ENCODE measurements at regions of chr12 and their contacts with region 1.

Region 1: DNA sequence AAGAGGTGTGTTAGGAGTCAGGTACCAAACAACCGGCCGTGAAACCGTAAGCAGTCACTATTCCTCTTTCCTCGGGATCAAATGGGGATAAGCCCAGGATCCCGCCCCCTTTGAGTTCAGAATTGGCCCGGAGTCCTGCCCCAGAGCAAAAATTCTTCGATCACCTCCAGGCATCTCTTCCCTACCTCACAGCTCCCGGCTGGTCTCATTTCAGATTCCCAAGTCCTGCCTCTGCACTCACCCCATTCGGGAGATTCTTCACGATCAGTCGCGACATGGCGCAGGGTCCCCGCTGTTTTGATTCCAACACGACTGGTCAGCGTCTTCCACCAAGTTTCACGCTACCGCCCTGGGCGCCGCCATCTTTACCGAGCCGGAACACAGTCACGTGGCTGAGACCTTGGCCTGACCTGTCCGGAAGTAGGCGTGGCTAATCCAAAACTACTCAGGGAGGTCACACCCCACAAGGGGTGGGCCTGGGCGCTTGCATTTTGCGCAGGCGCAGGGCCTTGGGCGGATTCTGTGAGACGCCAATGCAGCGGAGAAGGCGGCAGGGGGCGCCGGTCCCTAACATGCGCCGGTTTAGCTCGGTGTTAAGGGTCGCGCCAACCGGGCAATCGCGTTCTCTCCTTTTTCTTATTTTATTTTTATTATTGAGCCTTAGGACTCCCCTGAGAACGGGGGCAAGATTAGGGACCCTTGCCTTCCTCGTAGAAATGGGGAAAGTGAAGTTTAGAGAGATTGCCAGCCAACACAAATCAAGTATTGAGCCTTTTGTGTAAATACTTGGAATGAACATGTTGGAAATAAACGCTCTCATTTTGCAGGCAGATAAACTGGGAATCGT is at the start of gene RBM19:
- DNase-seq: peak; percentile 98
- H3K4me3 Mint-ChIP-seq: peak within 1 kb of the TSS; percentile 100
- H3K27ac Mint-ChIP-seq: peak within 1 kb of the TSS; percentile 91
- H3K4me1 Mint-ChIP-seq: peaks cover 52% of the 10 kb centered on the region
- H3K27me3 Mint-ChIP-seq: no peaks in the 10 kb centered on the region
- total RNA-seq, gene RBM19: 89.0 to 96.2 TPM

Region 2: DNA sequence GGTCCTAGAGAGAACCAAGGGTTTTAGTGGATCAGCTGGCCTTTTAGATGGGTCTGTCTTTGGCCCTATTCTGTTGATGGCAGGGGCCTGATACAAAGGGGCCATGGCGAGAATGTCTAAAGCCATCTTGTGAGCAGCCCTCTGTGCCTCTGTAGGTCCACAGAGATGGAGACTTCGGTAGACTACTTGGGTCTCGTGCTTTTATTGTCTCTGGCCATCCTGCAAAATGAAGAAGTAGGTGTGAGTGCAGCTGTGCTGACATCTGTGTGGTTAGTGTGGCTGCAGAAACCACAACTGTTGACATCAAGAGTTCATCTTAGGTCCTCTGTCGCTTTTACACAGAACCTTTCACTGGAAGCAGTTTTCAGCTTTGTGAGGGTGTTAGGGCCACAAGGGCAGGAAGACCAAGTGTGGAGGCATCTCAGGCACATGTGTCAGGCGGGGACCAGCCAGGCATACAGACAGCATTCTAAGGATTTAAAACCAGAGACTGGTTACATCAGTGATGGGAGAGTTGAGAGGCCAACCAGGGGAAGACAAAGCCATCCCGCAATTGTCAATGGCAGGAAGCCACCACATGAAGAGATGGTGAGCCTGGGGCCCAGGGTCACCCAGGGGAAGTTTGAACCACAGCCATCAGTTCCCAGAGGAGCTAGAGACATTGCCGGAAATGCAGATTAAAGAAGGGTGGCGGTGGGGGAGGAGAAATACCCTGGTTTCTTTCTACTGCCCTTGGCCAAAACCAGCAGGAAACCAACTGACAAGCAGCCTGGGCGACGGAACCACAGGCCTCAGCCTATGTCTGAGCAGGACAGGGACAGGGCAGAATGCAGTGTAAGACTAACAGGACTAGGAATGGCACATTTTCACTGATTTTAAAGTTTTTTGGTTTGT is 757.9 kb before region 1 on chr12:
- CTCF ChIA-PET with region 1: no interaction called
- intact Hi-C with region 1: loop called (anchors 1 kb)
- DNase-seq: peak; percentile 89
- H3K4me3 Mint-ChIP-seq: peak overlapping the region; percentile 34
- H3K27ac Mint-ChIP-seq: peak overlapping the region; percentile 95
- H3K4me1 Mint-ChIP-seq: peaks cover 41% of the 10 kb centered on the region
- H3K27me3 Mint-ChIP-seq: no peaks in the 10 kb centered on the region

Region 3: DNA sequence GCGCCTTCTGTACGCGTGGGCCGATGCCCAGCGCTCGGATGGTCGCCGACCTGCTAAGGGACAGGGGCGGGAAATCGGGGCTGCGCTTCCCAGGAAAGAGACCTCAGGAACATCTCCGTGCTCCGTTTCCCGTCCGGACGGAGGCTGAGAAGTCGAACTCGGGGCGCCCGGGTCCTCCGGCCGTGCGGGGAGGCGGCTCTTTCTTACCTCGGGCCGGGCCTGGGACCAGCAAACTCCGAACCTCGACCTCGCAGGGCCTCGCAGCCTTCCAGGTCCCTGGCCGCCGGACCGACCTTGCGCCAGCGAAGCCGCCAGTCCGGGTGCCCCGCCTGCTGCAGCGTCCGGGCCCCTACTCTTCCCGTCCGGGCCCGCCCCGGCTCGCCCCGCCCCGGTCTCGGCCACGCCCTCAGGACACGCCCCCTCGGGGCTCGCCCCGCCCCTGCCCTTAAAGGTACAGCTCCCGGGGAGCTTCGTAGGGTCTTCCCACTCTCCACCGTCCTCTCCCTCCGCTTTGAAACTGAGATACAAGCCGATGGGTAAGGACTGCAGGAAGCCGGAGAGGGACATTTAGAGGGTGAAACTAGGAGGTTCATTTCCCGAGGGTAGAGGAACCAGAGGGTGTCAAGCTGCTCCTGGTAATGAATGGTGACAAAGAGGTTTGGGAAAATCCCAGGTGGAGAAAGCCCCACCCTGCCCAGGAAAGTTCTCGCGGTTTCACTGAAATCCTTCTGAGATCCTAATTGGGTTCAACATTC is 631.2 kb before region 1 on chr12 and contains the start of gene SLC8B1:
- CTCF ChIA-PET with region 1: no interaction called
- intact Hi-C with region 1: loop called (anchors 5 kb)
- DNase-seq: peak; percentile 87
- H3K4me3 Mint-ChIP-seq: peak within 1 kb of the TSS; percentile 96
- H3K27ac Mint-ChIP-seq: peak within 1 kb of the TSS; percentile 84
- H3K4me1 Mint-ChIP-seq: peaks cover 34% of the 10 kb centered on the region
- H3K27me3 Mint-ChIP-seq: no peaks in the 10 kb centered on the region
- total RNA-seq, gene SLC8B1: 20.2 to 20.4 TPM

Region 4: DNA sequence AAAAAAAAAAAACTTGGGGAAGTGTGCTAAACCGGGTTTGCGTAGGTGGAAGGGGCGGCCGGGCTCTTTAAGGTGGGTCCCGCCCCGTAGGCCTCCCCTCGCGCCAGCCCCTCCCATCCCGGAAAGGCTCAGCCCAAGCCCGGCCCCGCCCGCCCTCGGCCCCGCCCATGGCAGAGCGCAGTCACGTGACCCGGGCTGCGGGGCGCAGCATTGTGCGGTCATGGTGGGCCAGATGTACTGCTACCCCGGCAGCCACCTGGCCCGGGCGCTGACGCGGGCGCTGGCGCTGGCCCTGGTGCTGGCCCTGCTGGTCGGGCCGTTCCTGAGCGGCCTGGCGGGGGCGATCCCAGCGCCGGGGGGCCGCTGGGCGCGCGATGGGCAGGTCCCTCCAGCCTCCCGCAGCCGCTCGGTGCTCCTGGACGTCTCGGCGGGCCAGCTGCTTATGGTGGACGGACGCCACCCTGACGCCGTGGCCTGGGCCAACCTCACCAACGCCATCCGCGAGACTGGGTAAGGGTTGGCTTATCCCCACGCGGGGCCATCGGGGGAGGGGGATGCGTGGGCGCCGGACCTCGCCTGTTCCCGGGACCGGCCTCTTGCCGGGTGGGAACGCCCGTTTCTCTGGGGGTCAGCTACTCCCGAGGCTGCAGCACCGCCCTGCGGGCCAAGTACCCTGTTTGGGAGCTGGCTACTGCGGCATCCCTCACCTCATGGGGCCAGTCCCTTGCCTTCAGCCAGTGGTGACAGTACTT is 607.6 kb before region 1 on chr12 and contains the start of gene PLBD2:
- CTCF ChIA-PET with region 1: no interaction called
- intact Hi-C with region 1: loop called (anchors 5 kb)
- DNase-seq: peak; percentile 96
- H3K4me3 Mint-ChIP-seq: peak within 1 kb of the TSS; percentile 84
- H3K27ac Mint-ChIP-seq: peak within 1 kb of the TSS; percentile 88
- H3K4me1 Mint-ChIP-seq: peaks cover 17% of the 10 kb centered on the region
- H3K27me3 Mint-ChIP-seq: no peaks in the 10 kb centered on the region
- total RNA-seq, gene PLBD2: 13.9 to 14.1 TPM

Region 5: GRCh38 chr12:113673458-113674238 is 292.5 kb before region 1 on chr12:
- CTCF ChIA-PET with region 1: no interaction called
- intact Hi-C with region 1: no loop called
- DNase-seq: no peak
- H3K4me3 Mint-ChIP-seq: no peak overlapping the region
- H3K27ac Mint-ChIP-seq: no peak overlapping the region
- H3K4me1 Mint-ChIP-seq: no peaks in the 10 kb centered on the region
- H3K27me3 Mint-ChIP-seq: peaks cover 28% of the 10 kb centered on the region